Heart left ventricle (tissue), 16 donors: ENCODE measurements at regions of chrX and their contacts with region 1.

Region 1: GRCh38 chrX:15854712-15855567 is at the start of gene AP1S2:
- DNase-seq: peak; percentile 92 to 96 (median 95)
- ATAC-seq: peak; percentile 98 to 99 (median 98)
- H3K4me3 ChIP-seq: peak within 1 kb of the TSS; percentile 53 to 94 (median 78)
- H3K27ac ChIP-seq: peak within 1 kb of the TSS; percentile 85 to 98 (median 92)
- H3K4me1 ChIP-seq: peaks cover 0 to 41% (median 7%) of the 10 kb centered on the region in 12 donors
- H3K27me3 ChIP-seq: peaks cover 0 to 41% (median 0%) of the 10 kb centered on the region in 9 donors
- CTCF ChIP-seq: no peak
- POLR2A ChIP-seq: peak in 1 of 2 donors; percentile 82
- total RNA-seq, gene AP1S2: 128 to 267 (median 138) TPM

Region 2: DNA sequence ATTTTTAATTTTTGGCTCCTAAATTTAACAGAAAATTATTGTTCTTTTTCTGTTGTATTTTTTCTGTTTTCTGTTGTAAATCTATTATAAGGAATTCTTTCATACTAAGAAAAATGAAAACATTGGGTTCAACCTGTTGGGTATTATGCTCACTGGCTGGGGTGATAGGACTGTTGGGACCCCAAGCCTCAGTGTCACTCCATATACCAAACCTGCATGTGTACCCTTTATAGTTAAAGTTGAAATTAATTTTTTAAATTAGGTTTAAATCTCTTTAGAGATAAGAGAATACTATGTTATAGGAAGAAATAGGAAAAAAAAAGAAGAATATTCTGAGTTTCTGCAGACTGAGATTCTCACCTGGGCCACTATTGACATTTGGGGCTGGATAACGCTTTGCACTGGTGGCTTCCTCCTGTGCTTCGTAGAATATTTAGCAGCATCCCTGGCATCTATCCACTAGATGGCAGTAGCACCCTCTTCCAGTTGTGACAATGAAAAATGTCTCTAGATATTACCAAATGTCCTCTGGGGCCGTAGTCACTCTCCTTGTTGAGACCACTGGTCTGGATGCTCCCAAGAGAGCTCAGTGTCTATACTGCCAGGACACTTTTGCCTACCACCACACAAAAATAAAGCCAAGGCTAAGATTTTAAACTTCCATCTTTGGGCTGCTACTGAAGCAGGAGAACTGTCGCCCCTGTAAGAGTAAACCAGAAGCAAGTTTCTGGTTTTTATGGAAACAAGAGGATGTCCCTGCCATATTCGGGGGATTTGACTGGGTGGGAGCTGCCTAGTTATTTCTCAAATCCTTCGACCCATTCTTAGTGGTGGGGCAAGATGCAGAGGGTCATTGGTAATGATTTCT is 167.9 kb before region 1 on chrX:
- intact Hi-C with region 1: loop called in 1 of 10 experiments (anchors 10 kb)
- DNase-seq: peak in 3 of 5 donors; percentile 34 to 41 (median 36)
- ATAC-seq: peak in 3 of 4 donors; percentile 69 to 86 (median 82)
- H3K4me3 ChIP-seq: no peak overlapping the region
- H3K27ac ChIP-seq: no peak overlapping the region
- H3K4me1 ChIP-seq: peaks cover 0 to 7% (median 0%) of the 10 kb centered on the region in 12 donors
- H3K27me3 ChIP-seq: no peaks in the 10 kb centered on the region
- CTCF ChIP-seq: peak; percentile 60 to 88 (median 67)
- POLR2A ChIP-seq: no peak

Region 3: GRCh38 chrX:15789979-15790768 is 64.8 kb before region 1 on chrX and contains the start of gene ZRSR2:
- intact Hi-C with region 1: loop called in 1 of 10 experiments (anchors 10 kb)
- DNase-seq: peak; percentile 77 to 90 (median 87)
- ATAC-seq: peak; percentile 96 to 99 (median 99)
- H3K4me3 ChIP-seq: peak within 1 kb of the TSS; percentile 62 to 96 (median 75)
- H3K27ac ChIP-seq: peak within 1 kb of the TSS; percentile 44 to 95 (median 80)
- H3K4me1 ChIP-seq: peaks cover 0 to 45% (median 4%) of the 10 kb centered on the region in 12 donors
- H3K27me3 ChIP-seq: no peaks in the 10 kb centered on the region
- CTCF ChIP-seq: no peak
- POLR2A ChIP-seq: no peak
- total RNA-seq, gene ZRSR2: 3.1 to 11.1 (median 7.5) TPM

Region 4: DNA sequence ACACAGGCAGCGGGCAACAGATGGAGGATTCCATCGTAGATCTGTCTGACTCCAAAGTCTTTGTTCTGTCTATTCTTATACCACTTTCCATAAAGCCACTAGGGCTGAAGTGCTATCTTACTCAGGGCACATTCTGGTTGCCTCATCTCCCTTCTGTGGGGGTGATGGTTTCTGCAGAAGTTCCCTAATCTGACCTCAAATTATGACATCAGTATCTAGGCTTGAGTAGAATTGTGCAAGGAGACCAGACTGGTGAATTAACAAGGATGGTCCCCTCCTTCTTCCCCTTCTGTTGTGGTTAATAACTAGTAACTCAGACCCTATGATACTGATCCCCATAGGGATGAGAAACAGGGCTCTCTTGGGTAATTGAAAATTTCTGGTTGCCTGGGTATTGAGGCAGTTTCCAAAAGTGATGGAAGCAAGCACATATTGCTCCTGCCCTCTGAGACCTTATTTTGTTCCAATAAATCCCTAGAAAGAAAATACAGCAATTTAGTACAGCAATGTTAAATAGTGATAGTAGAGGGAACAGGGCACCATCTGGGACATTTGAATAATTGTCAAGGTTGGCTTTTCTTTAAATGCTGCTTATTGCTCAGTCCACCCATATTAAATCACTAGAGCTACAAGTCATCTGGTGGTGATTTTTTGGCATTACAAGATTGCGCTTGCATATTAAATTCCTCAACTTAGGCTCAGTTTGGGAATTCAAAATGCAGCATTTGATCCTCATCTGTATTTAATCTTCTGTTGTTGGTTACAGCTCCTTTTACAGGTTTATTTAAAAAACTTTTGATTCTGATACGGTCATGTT is 57.0 kb after region 1 on chrX:
- intact Hi-C with region 1: loop called in 3 of 10 experiments (anchors 5 to 10 kb)
- DNase-seq: no peak
- ATAC-seq: peak in 3 of 4 donors; percentile 52 to 77 (median 57)
- H3K4me3 ChIP-seq: no peak overlapping the region
- H3K27ac ChIP-seq: no peak overlapping the region
- H3K4me1 ChIP-seq: peaks cover 0 to 23% (median 0%) of the 10 kb centered on the region in 12 donors
- H3K27me3 ChIP-seq: peaks cover 0 to 42% (median 0%) of the 10 kb centered on the region in 9 donors
- CTCF ChIP-seq: no peak
- POLR2A ChIP-seq: no peak

Region 5: DNA sequence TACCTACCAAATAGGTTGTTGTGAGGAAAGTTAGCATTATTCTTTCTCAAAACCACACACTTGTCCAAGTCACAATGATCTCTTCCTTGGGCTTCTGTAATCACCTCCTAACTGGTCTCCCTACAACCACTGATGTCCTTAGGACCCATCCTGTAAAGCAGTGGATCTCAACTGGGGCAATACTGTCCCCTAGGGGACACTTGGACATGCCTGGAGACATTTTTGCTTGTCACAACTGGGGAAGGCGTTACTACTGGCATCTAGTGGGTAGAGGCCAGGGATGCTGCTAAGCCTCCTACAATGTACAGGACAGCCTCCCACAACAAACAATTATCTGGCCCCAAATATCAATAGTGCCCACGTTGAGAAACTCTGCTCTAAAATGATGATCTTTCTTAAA is 118.4 kb after region 1 on chrX:
- intact Hi-C with region 1: loop called in 3 of 10 experiments (anchors 2 to 5 kb)
- DNase-seq: peak in 3 of 5 donors; percentile 19 to 25 (median 25)
- ATAC-seq: peak in 3 of 4 donors; percentile 82 to 86 (median 83)
- H3K4me3 ChIP-seq: no peak overlapping the region
- H3K27ac ChIP-seq: no peak overlapping the region
- H3K4me1 ChIP-seq: peaks cover 0 to 11% (median 0%) of the 10 kb centered on the region in 12 donors
- H3K27me3 ChIP-seq: peaks cover 0 to 17% (median 0%) of the 10 kb centered on the region in 9 donors
- CTCF ChIP-seq: peak; percentile 32 to 61 (median 44)
- POLR2A ChIP-seq: no peak